ENCODE measurements at regions of chr12 and their contacts with region 1.

Region 1: DNA sequence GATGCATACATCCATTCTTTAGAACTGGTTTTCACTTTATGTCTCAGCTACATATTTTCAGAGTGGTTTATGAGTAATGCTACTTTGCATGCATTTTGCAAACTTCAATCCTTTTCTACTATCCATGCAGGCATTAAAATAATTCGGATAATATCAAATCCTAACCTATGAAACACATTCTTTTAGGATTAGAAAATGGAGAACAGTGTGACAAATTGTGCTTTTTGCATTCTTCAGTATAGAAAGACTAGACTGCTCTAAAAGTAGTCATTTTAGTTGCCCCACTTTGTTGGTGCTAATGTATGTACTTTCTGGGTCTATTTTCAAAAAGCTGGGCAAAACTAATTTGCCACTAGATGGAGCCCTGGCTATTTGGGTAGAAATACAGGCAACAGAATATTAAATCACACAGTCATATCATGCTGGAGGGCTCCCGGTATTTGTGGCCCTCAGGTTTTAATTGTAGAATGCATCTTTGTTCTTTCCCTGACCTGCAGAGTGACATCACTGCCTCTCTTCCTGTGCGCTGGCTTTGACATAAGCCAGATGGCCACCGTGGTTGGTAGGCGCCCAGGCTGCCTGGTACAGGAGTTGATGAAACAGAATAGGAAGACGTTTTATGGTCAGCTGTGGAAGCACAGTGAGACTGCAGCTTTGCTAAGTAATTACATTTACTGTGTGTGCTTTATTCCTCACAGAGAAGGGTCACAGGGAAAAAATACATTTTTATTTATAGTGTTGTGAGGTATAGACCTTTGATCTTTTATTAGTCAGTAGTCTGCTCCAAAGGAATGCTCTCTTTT is 28.1 kb downstream of the MSRB3 start:
- DNase-seq: no peak
- ATAC-seq: peak; percentile 32
- H3K4me3 ChIP-seq: no peak overlapping the region
- H3K4me3 Mint-ChIP-seq: no peak overlapping the region
- H3K27ac ChIP-seq: no peak overlapping the region
- H3K27ac Mint-ChIP-seq: no peak overlapping the region
- H3K4me1 ChIP-seq: no peaks in the 10 kb centered on the region
- H3K4me1 Mint-ChIP-seq: peaks cover 0 to 18% (median 9%) of the 10 kb centered on the region in 7 donors
- H3K27me3 ChIP-seq: no peaks in the 10 kb centered on the region
- H3K27me3 Mint-ChIP-seq: peaks cover 20 to 31% (median 23%) of the 10 kb centered on the region in 5 donors

Region 2: GRCh38 chr12:65156366-65156841 is 150.2 kb before region 1 on chr12:
- CTCF ChIA-PET with region 1: no interaction called
- POLR2A ChIA-PET with region 1: no interaction called
- intact Hi-C with region 1: no loop called
- DNase-seq: peak in 6 of 9 donors; percentile 14 to 43 (median 26)
- ATAC-seq: peak; percentile 49
- H3K4me3 ChIP-seq: no peak overlapping the region
- H3K4me3 Mint-ChIP-seq: peak overlapping the region in 6 of 10 donors; percentile 4 to 53 (median 36)
- H3K27ac ChIP-seq: no peak overlapping the region
- H3K27ac Mint-ChIP-seq: peak overlapping the region in 6 of 9 donors; percentile 3 to 73 (median 37)
- H3K4me1 ChIP-seq: peaks cover 0 to 10% of the 10 kb centered on the region in 2 donors
- H3K4me1 Mint-ChIP-seq: peaks cover 6 to 16% (median 11%) of the 10 kb centered on the region in 7 donors
- H3K27me3 ChIP-seq: no peaks in the 10 kb centered on the region
- H3K27me3 Mint-ChIP-seq: peaks cover 12 to 27% (median 25%) of the 10 kb centered on the region in 5 donors

Region 3: DNA sequence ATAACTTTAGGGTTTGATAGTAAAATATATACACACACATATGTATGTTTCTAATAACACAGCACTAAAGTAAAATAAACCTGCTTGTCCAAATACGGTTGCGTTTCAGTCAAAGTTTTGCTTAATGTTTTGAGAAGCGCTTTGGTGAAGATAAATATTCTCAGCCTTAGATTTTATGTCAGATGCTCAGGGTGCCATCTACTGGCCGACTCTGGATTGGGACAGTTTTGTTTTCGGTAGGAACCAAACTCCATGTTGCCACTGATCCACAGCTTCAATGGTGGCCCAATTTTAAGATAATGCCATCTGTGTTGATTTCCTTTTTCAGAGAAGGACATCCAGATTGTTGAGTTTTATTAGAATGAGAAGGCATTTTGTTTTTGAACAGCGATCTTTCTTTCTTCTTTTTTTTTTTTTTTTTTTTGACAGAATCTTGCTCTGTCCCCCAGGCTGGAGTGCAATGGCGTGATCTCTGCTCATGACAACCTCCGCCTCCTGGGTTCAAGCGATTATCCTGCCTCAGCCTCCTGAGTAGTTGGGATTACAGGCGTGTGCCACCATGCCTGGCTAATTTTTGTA is 780.9 kb after region 1 on chr12:
- CTCF ChIA-PET with region 1: no interaction called
- POLR2A ChIA-PET with region 1: no interaction called
- intact Hi-C with region 1: loop called in 1 of 2 experiments (anchors 10 kb)
- DNase-seq: peak in 7 of 9 donors; percentile 9 to 42 (median 29)
- ATAC-seq: peak; percentile 72
- H3K4me3 ChIP-seq: no peak overlapping the region
- H3K4me3 Mint-ChIP-seq: no peak overlapping the region
- H3K27ac ChIP-seq: no peak overlapping the region
- H3K27ac Mint-ChIP-seq: no peak overlapping the region
- H3K4me1 ChIP-seq: no peaks in the 10 kb centered on the region
- H3K4me1 Mint-ChIP-seq: no peaks in the 10 kb centered on the region
- H3K27me3 ChIP-seq: peaks cover 0 to 5% of the 10 kb centered on the region in 2 donors
- H3K27me3 Mint-ChIP-seq: peaks cover 13 to 30% (median 27%) of the 10 kb centered on the region in 5 donors